Right ventricle myocardium inferior (tissue), 1 donor: ENCODE measurements at regions of chr13 and their contacts with region 1.

Region 1: DNA sequence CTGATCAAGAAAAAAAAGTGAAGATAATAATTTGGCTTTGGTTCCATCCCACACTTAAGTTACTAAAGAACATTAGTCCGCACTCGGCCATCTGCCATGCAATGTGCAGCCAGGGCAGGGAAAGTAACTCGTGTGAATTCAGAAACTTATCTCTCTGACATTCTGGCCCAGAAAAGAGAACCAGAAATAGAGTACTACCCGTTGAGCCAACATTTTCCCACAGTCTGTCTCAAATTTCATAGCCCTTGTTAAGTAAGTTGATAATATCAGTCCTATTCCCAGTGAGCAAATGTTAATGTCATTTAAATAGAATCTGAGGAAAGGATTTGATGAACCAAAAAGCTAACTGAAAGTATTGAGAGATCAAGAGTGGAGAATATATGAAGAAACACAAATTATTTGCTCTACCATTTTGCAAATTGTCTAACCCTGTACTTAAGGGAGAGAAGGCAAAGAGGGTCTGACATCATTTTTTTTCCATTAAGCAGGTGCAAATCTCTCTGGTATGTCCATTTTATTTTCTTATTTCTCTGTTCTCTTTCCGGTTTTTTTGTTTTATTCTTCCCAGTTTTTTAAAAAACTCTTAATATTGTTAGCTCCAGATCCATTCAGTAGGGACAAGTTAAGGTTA is 156.3 kb downstream of the NDFIP2 start:
- DNase-seq: peak; percentile 86
- ATAC-seq: peak; percentile 97

Region 2: GRCh38 chr13:79663977-79664636 is 26.9 kb after region 1 on chr13:
- intact Hi-C with region 1: loop called (anchors 2 kb)
- DNase-seq: no peak
- ATAC-seq: peak; percentile 71

Region 3: GRCh38 chr13:79782541-79783205 is 145.4 kb after region 1 on chr13:
- intact Hi-C with region 1: loop called (anchors 2 kb)
- DNase-seq: peak; percentile 82
- ATAC-seq: peak; percentile 95